ENCODE measurements at regions of chr5 and their contacts with region 1.

Region 1: GRCh38 chr5:140322751-140323731 is 20.1 kb upstream of the PFDN1 start:
- DNase-seq: peak; percentile 80 to 95
- H3K4me3 ChIP-seq: peak overlapping the region; percentile 43; the same call in 1 of the 2 replicates
- H3K27ac ChIP-seq: peak overlapping the region; percentile 94
- H3K4me1 ChIP-seq: peaks cover 61% of the 10 kb centered on the region
- H3K27me3 ChIP-seq: no peaks in the 10 kb centered on the region
- CTCF ChIP-seq: no peak

Region 2: GRCh38 chr5:139895647-139896046 is 427.4 kb before region 1 on chr5:
- CTCF ChIA-PET with region 1: no interaction called
- POLR2A ChIA-PET with region 1: no interaction called
- intact Hi-C with region 1: no loop called
- DNase-seq: no peak
- H3K4me3 ChIP-seq: no peak overlapping the region
- H3K27ac ChIP-seq: no peak overlapping the region
- H3K4me1 ChIP-seq: no peaks in the 10 kb centered on the region
- H3K27me3 ChIP-seq: peaks cover 7% of the 10 kb centered on the region; the same call in 1 of the 2 replicates
- CTCF ChIP-seq: no peak

Region 3: GRCh38 chr5:140220032-140220697 is 102.9 kb before region 1 on chr5:
- CTCF ChIA-PET with region 1: no interaction called
- POLR2A ChIA-PET with region 1: no interaction called
- intact Hi-C with region 1: no loop called
- DNase-seq: peak in 1 of 2 experiments; percentile 46
- H3K4me3 ChIP-seq: no peak overlapping the region
- H3K27ac ChIP-seq: no peak overlapping the region
- H3K4me1 ChIP-seq: peaks cover 39% of the 10 kb centered on the region
- H3K27me3 ChIP-seq: no peaks in the 10 kb centered on the region
- CTCF ChIP-seq: no peak

Region 4: DNA sequence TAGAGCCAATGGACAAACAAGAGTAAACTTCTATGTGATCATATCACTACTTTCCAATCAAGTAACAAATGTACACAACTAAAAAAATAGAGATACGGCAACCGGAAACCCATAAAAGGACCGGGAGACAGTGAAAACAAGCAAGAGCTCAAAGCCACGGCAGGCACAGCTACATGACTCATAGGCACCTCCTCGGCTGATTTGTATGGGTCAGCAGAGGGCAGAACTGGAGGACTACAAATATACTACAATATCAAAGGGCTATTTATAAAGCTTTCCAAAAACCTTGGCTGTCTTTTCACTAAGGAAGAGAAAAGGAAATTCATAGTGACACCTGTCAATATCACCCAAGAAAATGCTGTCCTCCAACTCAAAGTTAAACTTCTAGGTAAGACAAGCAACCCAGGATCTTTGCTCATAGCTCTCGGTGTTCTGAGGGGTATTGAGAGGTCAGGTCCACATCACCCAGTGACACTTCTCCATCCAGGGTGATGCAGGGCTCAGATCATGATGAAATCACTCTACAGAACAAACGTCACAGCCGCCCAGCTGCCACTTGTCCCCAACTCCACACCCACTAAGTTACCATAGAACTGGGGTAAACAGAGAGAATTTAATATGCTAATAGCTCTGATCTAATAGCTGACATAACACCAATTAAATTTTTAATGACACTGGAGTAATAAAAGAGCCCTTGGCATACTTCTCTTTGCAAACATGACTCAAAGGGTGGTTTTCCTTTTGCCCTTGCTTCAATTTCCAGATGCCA is 61.5 kb before region 1 on chr5:
- CTCF ChIA-PET with region 1: no interaction called
- POLR2A ChIA-PET with region 1: interaction called, 4 read pairs
- intact Hi-C with region 1: loop called (anchors 1 kb)
- DNase-seq: peak; percentile 77 to 95
- H3K4me3 ChIP-seq: peak overlapping the region; percentile 4; the same call in 1 of the 2 replicates
- H3K27ac ChIP-seq: peak overlapping the region; percentile 98
- H3K4me1 ChIP-seq: peaks cover 68% of the 10 kb centered on the region
- H3K27me3 ChIP-seq: no peaks in the 10 kb centered on the region
- CTCF ChIP-seq: no peak

Region 5: GRCh38 chr5:140312067-140312790 is 10.8 kb before region 1 on chr5:
- CTCF ChIA-PET with region 1: no interaction called
- POLR2A ChIA-PET with region 1: interaction called, 22 read pairs
- intact Hi-C with region 1: loop called (anchors 1 kb)
- DNase-seq: peak; percentile 33 to 83
- H3K4me3 ChIP-seq: no peak overlapping the region; the same call in 1 of the 2 replicates
- H3K27ac ChIP-seq: peak overlapping the region; percentile 89
- H3K4me1 ChIP-seq: peaks cover 46% of the 10 kb centered on the region
- H3K27me3 ChIP-seq: no peaks in the 10 kb centered on the region
- CTCF ChIP-seq: no peak

Measured in PC-9 (cell line).